Ovary (tissue), 10 donors: ENCODE measurements at regions of chr3 and their contacts with region 1.

Region 1: DNA sequence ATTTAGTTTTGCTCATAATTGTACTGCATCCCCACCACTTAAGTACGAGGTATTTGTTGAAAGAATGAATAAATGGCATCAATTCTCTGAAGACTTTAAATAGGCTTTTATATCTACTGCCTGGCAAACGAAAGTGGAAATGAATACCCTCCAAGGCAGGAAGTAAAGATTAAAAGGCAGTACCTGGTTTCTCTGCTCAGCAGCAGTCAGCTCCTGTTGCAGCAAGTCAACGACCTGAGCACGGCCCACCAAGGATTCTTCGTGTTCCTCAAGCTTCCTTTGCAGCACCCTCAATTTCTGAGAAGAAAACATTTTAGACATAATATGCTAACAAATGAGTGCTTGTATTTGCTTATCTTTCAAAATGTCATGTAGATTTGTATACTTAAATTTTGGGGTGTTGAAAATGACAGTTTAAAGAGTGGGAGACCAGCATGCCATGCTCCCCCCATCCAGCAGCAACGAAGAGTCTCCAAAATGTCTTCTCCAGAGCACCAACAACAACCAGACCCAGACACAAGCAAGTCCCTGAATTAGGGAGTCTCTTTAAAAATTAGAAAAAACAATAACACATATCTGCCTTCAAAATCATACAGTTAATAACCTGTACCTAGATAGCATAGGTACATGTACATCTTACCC is 31.2 kb downstream of the GOLGB1 start:
- DNase-seq: no peak
- H3K4me3 ChIP-seq: no peak overlapping the region
- H3K27ac ChIP-seq: no peak overlapping the region
- H3K4me1 ChIP-seq: peaks cover 4% of the 10 kb centered on the region
- H3K27me3 ChIP-seq: no peaks in the 10 kb centered on the region
- CTCF ChIP-seq: no peak
- EP300 ChIP-seq: no peak
- POLR2A ChIP-seq: no peak

Region 2: GRCh38 chr3:121295966-121296365 is 422.4 kb before region 1 on chr3:
- intact Hi-C with region 1: loop called in 1 of 4 experiments (anchors 10 kb)
- DNase-seq: no peak
- H3K4me3 ChIP-seq: no peak overlapping the region
- H3K27ac ChIP-seq: no peak overlapping the region
- H3K4me1 ChIP-seq: no peaks in the 10 kb centered on the region
- H3K27me3 ChIP-seq: no peaks in the 10 kb centered on the region
- CTCF ChIP-seq: no peak
- EP300 ChIP-seq: no peak
- POLR2A ChIP-seq: no peak